Head of caudate nucleus (tissue), 42 donors: ENCODE measurements at regions of chr5 and their contacts with region 1.

Region 1: GRCh38 chr5:81751009-81751835 is at the start of gene SSBP2:
- DNase-seq: peak; percentile 97 to 100 (median 100)

Region 2: DNA sequence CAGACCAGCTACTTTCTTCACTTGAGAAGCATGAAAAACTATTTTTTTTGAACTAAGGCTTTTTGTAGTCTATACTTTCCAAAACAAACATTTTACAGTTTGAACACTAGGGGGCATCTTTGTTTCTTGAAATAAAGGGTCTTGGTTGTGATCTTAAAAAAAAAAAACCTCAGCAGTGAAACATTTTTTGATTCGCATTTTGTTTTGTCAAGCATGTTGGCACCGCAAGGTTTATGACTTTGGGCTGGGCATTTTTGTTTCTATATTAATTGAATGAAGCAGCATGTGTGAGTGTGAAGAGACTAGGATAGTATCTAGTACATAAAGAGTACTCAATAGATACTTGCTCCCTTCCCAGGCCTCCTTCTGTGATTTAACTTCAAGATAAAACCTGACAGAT is 325.7 kb before region 1 on chr5:
- intact Hi-C with region 1: loop called (anchors 10 kb)
- DNase-seq: peak in 1 of 42 donors; percentile 13

Region 3: DNA sequence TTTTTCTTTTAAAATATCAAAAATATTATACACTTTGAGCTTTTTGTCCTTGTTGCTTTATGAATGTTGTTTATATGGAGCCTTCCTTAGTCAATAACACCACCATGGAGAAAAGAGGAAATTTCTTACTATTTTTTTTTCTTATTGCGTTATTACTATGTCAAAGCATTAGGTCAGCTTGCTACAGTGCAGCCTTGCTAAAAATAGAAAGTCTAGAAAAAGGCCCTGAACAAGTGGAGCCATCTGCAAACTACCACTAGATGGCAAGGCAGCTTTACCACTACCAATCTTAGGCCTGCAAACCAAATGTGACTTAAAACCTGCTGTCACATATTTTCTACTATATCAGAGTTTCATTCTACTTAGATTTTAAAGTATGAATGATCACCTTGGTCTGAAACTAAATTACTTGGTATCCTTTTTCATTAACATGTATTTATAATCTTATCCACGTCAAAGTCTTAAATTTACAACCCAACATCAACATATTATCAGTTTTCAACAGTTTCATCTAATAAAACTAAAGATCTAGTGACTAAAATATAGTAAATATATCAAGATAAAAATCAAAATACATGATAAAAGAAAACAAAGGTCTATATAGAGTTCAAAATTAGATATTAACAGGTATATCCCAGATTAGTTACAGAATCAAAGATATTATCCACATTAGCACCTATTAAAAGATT is 244.2 kb before region 1 on chr5:
- intact Hi-C with region 1: loop called (anchors 5 kb)
- DNase-seq: peak in 36 of 42 donors; percentile 13 to 88 (median 61)

Region 4: DNA sequence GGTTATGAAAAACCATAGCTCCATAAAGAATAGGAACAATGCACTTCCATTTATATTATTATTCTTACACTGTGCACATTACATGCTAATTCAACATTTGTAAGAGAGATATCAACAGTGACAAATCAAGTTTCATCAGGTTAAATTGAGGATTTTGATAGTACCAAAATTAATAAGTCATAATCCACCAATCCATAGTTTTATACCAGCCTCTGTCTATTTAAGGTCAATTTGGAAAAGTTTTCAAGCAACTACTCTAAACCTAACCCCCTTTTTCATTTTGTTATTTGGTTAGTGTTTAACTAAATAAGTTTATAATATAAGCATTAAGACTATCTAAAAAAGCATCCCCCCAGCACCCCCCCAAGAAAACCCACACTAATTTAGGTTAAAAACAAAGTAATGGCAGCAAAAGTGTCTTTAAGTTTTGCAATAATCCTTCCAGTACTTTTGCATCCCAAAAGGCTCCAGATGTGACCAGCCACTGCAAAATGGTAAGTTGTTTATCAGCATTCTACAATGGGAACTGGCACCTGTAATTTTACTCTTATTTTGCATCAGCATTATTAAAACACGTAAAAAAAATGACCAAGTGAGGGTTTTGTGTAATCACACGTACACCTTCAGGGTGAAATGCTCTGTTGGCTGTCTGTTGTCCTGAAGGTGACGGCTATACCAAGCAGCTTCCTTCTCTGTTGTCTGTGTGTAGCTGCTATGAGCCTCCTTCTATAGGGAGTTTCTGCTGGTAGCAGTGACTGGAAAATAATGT is 36.4 kb after region 1 on chr5:
- intact Hi-C with region 1: loop called (anchors 5 kb)
- DNase-seq: peak in 31 of 42 donors; percentile 19 to 78 (median 53)

Region 5: GRCh38 chr5:81851481-81852178 is 100.4 kb after region 1 on chr5:
- intact Hi-C with region 1: loop called (anchors 1 kb)
- DNase-seq: peak; percentile 94 to 99 (median 98)

Region 6: DNA sequence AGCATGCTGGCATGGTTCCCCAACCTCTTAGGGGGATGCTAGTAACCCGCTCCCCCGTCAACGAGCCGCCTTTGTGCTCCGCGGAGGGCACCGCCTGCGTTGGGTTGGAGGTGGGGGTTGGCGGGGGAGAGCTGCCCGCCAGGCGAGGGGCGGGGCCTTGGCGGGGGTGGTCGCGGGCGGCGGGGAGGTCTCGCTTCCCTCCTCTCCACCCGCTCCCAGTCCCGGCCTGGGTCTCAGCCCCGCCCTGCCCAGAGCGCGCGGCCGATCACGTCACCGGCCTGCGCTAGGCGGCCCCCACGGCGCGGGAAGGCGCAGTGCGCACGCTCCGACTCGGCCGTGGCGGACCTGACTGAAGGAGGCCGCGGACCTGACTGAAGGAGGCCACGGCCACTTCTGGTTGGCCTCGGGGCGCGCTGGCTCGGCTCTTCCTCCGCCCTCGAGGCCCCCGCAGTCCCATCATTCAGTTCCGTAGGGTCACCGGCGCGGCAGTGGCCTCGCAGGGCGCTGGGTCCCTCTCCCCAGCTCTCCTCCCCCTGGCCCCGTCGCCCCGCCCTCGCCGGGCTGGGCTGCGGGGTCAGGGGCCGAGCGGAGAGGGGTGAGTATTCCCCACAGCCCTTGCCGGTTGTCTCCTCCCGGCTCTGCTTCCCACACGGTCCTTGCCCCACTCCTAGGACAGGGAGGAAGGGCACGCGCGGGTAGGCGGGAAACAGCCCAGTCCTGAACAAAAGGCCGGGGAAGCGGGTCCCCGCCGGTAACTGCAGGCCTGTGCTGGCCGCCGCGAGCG is 220.7 kb after region 1 on chr5 and contains the start of gene ATG10:
- intact Hi-C with region 1: loop called (anchors 2 kb)
- DNase-seq: peak; percentile 77 to 98 (median 95)

Region 7: GRCh38 chr5:82165740-82166530 is 414.7 kb after region 1 on chr5:
- intact Hi-C with region 1: loop called (anchors 10 kb)
- DNase-seq: peak in 41 of 42 donors; percentile 15 to 91 (median 68)